ENCODE measurements at regions of chr5 and their contacts with region 1.

Region 1: GRCh38 chr5:43120720-43121564 is at the start of gene ZNF131:
- DNase-seq: peak; percentile 95 to 100 (median 98)
- H3K4me3 ChIP-seq: peak within 1 kb of the TSS; percentile 85 to 87
- H3K4me3 Mint-ChIP-seq: peak within 1 kb of the TSS; percentile 91 to 96 (median 94)
- H3K27ac ChIP-seq: peak within 1 kb of the TSS; percentile 97
- H3K27ac Mint-ChIP-seq: peak within 1 kb of the TSS; percentile 87 to 99 (median 98)
- H3K4me1 ChIP-seq: peaks cover 45% of the 10 kb centered on the region
- H3K4me1 Mint-ChIP-seq: peaks cover 21 to 46% (median 37%) of the 10 kb centered on the region in 4 donors
- H3K27me3 ChIP-seq: no peaks in the 10 kb centered on the region
- H3K27me3 Mint-ChIP-seq: no peaks in the 10 kb centered on the region
- total RNA-seq, gene ZNF131: 76.5 to 86.9 TPM

Region 2: GRCh38 chr5:41903892-41904799 is 1216.8 kb before region 1 on chr5 and contains the start of gene RIMOC1:
- CTCF ChIA-PET with region 1: no interaction called
- POLR2A ChIA-PET with region 1: interaction called, 19 read pairs
- intact Hi-C with region 1: loop called (anchors 5 kb)
- DNase-seq: peak; percentile 96 to 98 (median 98)
- H3K4me3 ChIP-seq: peak within 1 kb of the TSS; percentile 82 to 90
- H3K4me3 Mint-ChIP-seq: peak within 1 kb of the TSS; percentile 93 to 99 (median 98)
- H3K27ac ChIP-seq: peak within 1 kb of the TSS; percentile 74
- H3K27ac Mint-ChIP-seq: peak within 1 kb of the TSS; percentile 96 to 100 (median 97)
- H3K4me1 ChIP-seq: peaks cover 16% of the 10 kb centered on the region
- H3K4me1 Mint-ChIP-seq: peaks cover 22 to 48% (median 29%) of the 10 kb centered on the region in 4 donors
- H3K27me3 ChIP-seq: no peaks in the 10 kb centered on the region
- H3K27me3 Mint-ChIP-seq: peaks cover 0 to 2% of the 10 kb centered on the region in 2 donors
- total RNA-seq, gene RIMOC1: 33.1 to 33.7 TPM

Region 3: GRCh38 chr5:42994246-42995151 is 126.4 kb before region 1 on chr5:
- CTCF ChIA-PET with region 1: interaction called, 7 read pairs
- POLR2A ChIA-PET with region 1: interaction called, 103 read pairs
- intact Hi-C with region 1: loop called (anchors 1 kb)
- DNase-seq: peak; percentile 86 to 89 (median 88)
- H3K4me3 ChIP-seq: peak overlapping the region; percentile 72 to 76
- H3K4me3 Mint-ChIP-seq: peak overlapping the region; percentile 93 to 100 (median 100)
- H3K27ac ChIP-seq: peak overlapping the region; percentile 93
- H3K27ac Mint-ChIP-seq: peak overlapping the region; percentile 98 to 100 (median 100)
- H3K4me1 ChIP-seq: peaks cover 34% of the 10 kb centered on the region
- H3K4me1 Mint-ChIP-seq: peaks cover 14 to 69% (median 26%) of the 10 kb centered on the region in 4 donors
- H3K27me3 ChIP-seq: no peaks in the 10 kb centered on the region
- H3K27me3 Mint-ChIP-seq: no peaks in the 10 kb centered on the region

Region 4: GRCh38 chr5:43040287-43041098 is 80.4 kb before region 1 on chr5 and contains the start of gene ANXA2R:
- CTCF ChIA-PET with region 1: interaction called, 15 read pairs
- POLR2A ChIA-PET with region 1: interaction called, 127 read pairs
- intact Hi-C with region 1: loop called (anchors 1 kb)
- DNase-seq: peak; percentile 94 to 97 (median 97)
- H3K4me3 ChIP-seq: peak within 1 kb of the TSS; percentile 78 to 99
- H3K4me3 Mint-ChIP-seq: peak within 1 kb of the TSS; percentile 97 to 100 (median 98)
- H3K27ac ChIP-seq: peak within 1 kb of the TSS; percentile 98
- H3K27ac Mint-ChIP-seq: peak within 1 kb of the TSS; percentile 99 to 100 (median 99)
- H3K4me1 ChIP-seq: peaks cover 50% of the 10 kb centered on the region
- H3K4me1 Mint-ChIP-seq: peaks cover 19 to 82% (median 39%) of the 10 kb centered on the region in 4 donors
- H3K27me3 ChIP-seq: no peaks in the 10 kb centered on the region
- H3K27me3 Mint-ChIP-seq: no peaks in the 10 kb centered on the region
- total RNA-seq, gene ANXA2R: 43.4 to 47.8 TPM

Region 5: DNA sequence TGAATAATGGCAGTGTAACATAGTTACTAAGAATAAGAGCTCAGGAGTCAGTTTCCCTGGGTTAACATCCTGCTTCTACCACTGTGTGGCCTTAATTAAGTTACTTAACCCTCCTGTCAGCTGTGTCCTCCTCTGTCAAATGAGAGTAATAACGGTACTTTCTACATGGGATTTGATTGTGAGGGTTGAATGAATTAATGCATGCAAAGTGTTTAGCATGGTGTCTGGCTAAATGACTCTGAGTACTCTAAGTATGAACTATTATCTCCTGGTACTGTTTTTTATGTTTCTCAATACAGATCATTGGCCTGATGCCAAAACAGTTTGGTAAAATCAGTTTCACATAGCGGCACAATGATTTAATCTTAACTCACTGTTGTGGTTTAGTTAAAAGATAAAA is 19.3 kb after region 1 on chr5:
- CTCF ChIA-PET with region 1: interaction called, 20 read pairs
- POLR2A ChIA-PET with region 1: interaction called, 13 read pairs
- intact Hi-C with region 1: no loop called
- DNase-seq: peak in 4 of 5 donors; percentile 21 to 46 (median 29)
- H3K4me3 ChIP-seq: no peak overlapping the region
- H3K4me3 Mint-ChIP-seq: peak overlapping the region in 4 of 8 donors; percentile 8 to 53 (median 22)
- H3K27ac ChIP-seq: no peak overlapping the region
- H3K27ac Mint-ChIP-seq: peak overlapping the region in 6 of 7 donors; percentile 20 to 65 (median 41)
- H3K4me1 ChIP-seq: peaks cover 43% of the 10 kb centered on the region
- H3K4me1 Mint-ChIP-seq: peaks cover 38 to 60% (median 50%) of the 10 kb centered on the region in 4 donors
- H3K27me3 ChIP-seq: no peaks in the 10 kb centered on the region
- H3K27me3 Mint-ChIP-seq: no peaks in the 10 kb centered on the region

Region 6: DNA sequence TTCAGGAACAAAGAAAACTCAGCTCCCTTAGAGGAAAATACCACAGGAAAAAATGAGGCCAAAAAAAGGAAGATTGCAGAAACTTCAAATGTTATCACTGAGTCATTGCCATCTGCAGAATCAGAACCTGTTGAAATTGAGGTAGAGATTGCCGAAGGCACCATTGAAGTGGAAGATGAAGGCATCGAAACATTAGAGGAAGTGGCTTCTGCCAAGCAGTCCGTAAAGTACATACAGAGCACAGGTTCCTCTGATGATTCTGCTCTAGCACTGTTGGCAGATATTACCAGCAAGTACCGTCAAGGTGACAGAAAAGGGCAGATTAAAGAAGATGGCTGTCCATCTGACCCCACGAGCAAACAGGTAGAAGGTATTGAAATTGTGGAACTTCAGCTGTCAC is 40.3 kb after region 1 on chr5:
- CTCF ChIA-PET with region 1: no interaction called
- POLR2A ChIA-PET with region 1: no interaction called
- intact Hi-C with region 1: no loop called
- DNase-seq: peak in 1 of 5 donors; percentile 4
- H3K4me3 ChIP-seq: no peak overlapping the region
- H3K4me3 Mint-ChIP-seq: peak overlapping the region in 1 of 8 donors; percentile 43
- H3K27ac ChIP-seq: no peak overlapping the region
- H3K27ac Mint-ChIP-seq: peak overlapping the region in 4 of 7 donors; percentile 61 to 82 (median 78)
- H3K4me1 ChIP-seq: peaks cover 11% of the 10 kb centered on the region
- H3K4me1 Mint-ChIP-seq: peaks cover 8 to 28% (median 19%) of the 10 kb centered on the region in 4 donors
- H3K27me3 ChIP-seq: no peaks in the 10 kb centered on the region
- H3K27me3 Mint-ChIP-seq: no peaks in the 10 kb centered on the region

Region 7: GRCh38 chr5:43533646-43534045 is 412.7 kb after region 1 on chr5:
- CTCF ChIA-PET with region 1: no interaction called
- POLR2A ChIA-PET with region 1: no interaction called
- intact Hi-C with region 1: no loop called
- DNase-seq: no peak
- H3K4me3 ChIP-seq: no peak overlapping the region
- H3K4me3 Mint-ChIP-seq: no peak overlapping the region
- H3K27ac ChIP-seq: no peak overlapping the region
- H3K27ac Mint-ChIP-seq: peak overlapping the region in 3 of 7 donors; percentile 49 to 83 (median 67)
- H3K4me1 ChIP-seq: no peaks in the 10 kb centered on the region
- H3K4me1 Mint-ChIP-seq: peaks cover 0 to 13% (median 5%) of the 10 kb centered on the region in 4 donors
- H3K27me3 ChIP-seq: no peaks in the 10 kb centered on the region
- H3K27me3 Mint-ChIP-seq: no peaks in the 10 kb centered on the region

Region 8: GRCh38 chr5:43556857-43557542 is 436.1 kb after region 1 on chr5 and contains the start of gene PAIP1:
- CTCF ChIA-PET with region 1: no interaction called
- POLR2A ChIA-PET with region 1: no interaction called
- intact Hi-C with region 1: loop called (anchors 1 kb)
- DNase-seq: peak; percentile 86 to 91 (median 88)
- H3K4me3 ChIP-seq: peak within 1 kb of the TSS; percentile 79 to 84
- H3K4me3 Mint-ChIP-seq: peak within 1 kb of the TSS; percentile 91 to 98 (median 94)
- H3K27ac ChIP-seq: peak within 1 kb of the TSS; percentile 84
- H3K27ac Mint-ChIP-seq: peak within 1 kb of the TSS; percentile 93 to 99 (median 97)
- H3K4me1 ChIP-seq: peaks cover 41% of the 10 kb centered on the region
- H3K4me1 Mint-ChIP-seq: peaks cover 7 to 13% (median 10%) of the 10 kb centered on the region in 4 donors
- H3K27me3 ChIP-seq: no peaks in the 10 kb centered on the region
- H3K27me3 Mint-ChIP-seq: no peaks in the 10 kb centered on the region
- total RNA-seq, gene PAIP1: 36.0 to 38.0 TPM